Testis (tissue), 5 donors: ENCODE measurements at regions of chr4 and their contacts with region 1.

Region 1: DNA sequence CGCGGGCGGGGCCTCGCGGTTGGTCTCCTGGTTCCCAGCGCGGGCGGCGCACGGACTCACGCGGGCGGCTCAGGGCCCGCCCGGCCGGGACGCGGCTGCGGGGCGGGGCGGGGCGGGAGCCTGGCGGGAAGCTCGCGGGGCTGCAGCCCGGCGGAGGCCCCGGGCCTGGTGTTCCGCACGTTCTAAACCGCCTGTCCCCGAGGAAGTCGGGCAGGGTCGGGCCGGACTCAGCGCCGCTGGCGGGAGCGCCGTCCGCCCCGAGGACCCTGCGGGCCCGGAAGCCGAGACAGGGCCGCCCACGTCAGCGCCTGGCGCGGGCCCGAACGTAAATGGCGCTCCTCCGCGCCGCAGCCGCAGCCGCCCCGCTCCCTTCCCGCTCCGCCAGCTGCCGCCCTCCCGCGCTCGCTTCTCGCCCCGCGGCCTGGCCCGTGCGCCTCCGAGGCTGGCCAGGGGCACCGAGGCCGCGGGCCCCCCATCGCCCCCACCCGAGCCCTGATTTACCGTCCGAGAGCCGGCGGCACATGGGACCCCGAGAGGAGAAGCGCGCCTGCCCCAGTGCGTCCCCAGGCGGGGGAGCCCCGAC is 309 bp upstream of the CTBP1 start:
- DNase-seq: peak; percentile 91
- H3K4me3 ChIP-seq: peak overlapping the region; percentile 73
- H3K27ac ChIP-seq: peak overlapping the region; percentile 88 to 95
- H3K4me1 ChIP-seq: peaks cover 42% of the 10 kb centered on the region
- H3K27me3 ChIP-seq: no peaks in the 10 kb centered on the region
- CTCF ChIP-seq: peak in 1 of 3 experiments; percentile 8
- POLR2A ChIP-seq: no peak

Region 2: GRCh38 chr4:1342003-1342402 is 92.8 kb after region 1 on chr4:
- intact Hi-C with region 1: loop called (anchors 2 kb)
- DNase-seq: no peak
- H3K4me3 ChIP-seq: no peak overlapping the region
- H3K27ac ChIP-seq: no peak overlapping the region
- H3K4me1 ChIP-seq: peaks cover 3% of the 10 kb centered on the region
- H3K27me3 ChIP-seq: no peaks in the 10 kb centered on the region
- CTCF ChIP-seq: no peak
- POLR2A ChIP-seq: no peak